Endothelial cell of umbilical vein (primary cell): ENCODE measurements at regions of chr3 and their contacts with region 1.

Region 1: GRCh38 chr3:42247576-42248027 is 18.4 kb downstream of the CCK start:
- DNase-seq: peak; percentile 61
- H3K4me3 ChIP-seq: no peak overlapping the region
- H3K27ac ChIP-seq: no peak overlapping the region
- H3K4me1 ChIP-seq: no peaks in the 10 kb centered on the region
- H3K27me3 ChIP-seq: peaks cover 20 to 24% of the 10 kb centered on the region in 2 experiments
- CTCF ChIP-seq: peak; percentile 60 to 70
- POLR2A ChIP-seq: no peak

Region 2: DNA sequence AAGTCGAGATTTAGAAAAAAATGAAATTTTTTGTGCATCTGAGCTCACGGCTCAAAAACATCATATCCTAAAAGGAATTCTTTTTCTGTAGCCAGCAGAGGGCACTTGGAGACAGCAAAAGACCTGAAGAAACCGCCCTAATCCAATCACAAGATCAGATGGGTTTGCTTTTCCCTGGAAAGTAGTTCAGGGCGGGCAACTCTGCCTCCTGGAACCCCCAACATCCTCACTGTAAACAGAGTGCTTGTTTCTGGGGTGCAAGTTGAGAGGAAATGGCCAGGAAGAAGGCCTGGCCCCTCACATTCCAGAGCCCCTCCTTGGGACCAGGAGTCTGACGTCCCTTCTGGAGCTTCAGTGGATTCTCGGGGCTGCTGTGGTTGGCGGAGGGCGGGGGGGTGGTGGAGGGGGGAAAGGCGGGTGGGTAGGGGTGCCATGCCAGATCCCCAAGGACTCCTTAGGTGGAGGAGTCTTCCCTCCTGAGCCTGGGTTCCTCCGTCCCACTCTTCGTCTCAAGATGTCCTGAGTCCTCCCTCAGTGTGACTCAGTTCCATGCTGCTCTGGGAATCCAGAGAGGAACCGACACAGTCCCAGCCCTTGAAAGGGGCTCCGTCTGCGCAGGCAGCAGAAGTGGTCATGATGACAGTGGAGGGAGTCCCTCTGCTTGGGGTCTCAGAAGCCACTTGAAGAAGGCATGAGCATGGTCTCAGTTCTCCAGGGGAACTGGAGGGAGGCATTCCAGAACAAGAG is 17.5 kb before region 1 on chr3:
- CTCF ChIA-PET with region 1: interaction called, 27 read pairs
- POLR2A ChIA-PET with region 1: no interaction called
- dilution Hi-C with region 1: no loop called
- intact Hi-C with region 1: no loop called
- DNase-seq: peak; percentile 46
- H3K4me3 ChIP-seq: no peak overlapping the region
- H3K27ac ChIP-seq: no peak overlapping the region
- H3K4me1 ChIP-seq: no peaks in the 10 kb centered on the region
- H3K27me3 ChIP-seq: peaks cover 4 to 7% of the 10 kb centered on the region in 2 experiments
- CTCF ChIP-seq: peak; percentile 43 to 45
- POLR2A ChIP-seq: no peak

Region 3: DNA sequence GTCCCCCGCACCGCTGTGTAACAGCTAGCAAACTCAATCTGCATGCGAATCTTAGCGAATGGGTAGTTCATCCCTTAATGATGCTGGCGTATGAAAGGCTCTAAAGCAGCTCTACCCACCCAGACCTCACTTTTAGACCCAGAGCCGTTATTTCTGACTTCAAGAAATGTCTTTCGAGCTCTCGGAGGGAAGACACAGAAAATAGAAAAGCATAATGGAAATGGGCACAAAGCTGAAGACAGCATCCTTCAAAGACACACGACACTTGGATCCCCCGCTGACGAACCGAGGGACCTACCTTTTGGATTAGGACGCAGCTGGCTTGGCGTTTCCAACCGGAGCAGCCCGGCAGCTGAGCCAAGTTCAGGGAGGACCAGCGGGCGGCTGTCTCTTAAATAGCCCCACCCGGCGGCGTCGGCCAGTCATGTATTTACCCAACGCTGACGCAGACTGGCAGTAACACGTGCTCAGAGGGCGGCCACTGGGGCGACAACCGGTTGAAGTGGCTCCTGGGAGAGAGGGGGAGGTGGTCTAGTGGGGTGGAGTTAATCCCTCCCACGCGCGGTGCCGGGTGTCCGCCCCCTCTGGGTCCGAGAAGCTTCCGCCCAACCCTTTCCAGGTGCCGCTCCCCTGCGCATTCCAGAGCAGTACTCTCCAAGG is 16.9 kb after region 1 on chr3:
- CTCF ChIA-PET with region 1: interaction called, 30 read pairs
- POLR2A ChIA-PET with region 1: no interaction called
- dilution Hi-C with region 1: no loop called
- intact Hi-C with region 1: no loop called
- DNase-seq: no peak
- H3K4me3 ChIP-seq: no peak overlapping the region
- H3K27ac ChIP-seq: no peak overlapping the region
- H3K4me1 ChIP-seq: no peaks in the 10 kb centered on the region
- H3K27me3 ChIP-seq: peaks cover 58 to 69% of the 10 kb centered on the region in 2 experiments
- CTCF ChIP-seq: no peak
- POLR2A ChIP-seq: no peak

Region 4: GRCh38 chr3:42434777-42435380 is 187.3 kb after region 1 on chr3:
- CTCF ChIA-PET with region 1: interaction called, 22 read pairs
- POLR2A ChIA-PET with region 1: no interaction called
- dilution Hi-C with region 1: no loop called
- intact Hi-C with region 1: no loop called
- DNase-seq: no peak
- H3K4me3 ChIP-seq: no peak overlapping the region
- H3K27ac ChIP-seq: no peak overlapping the region
- H3K4me1 ChIP-seq: no peaks in the 10 kb centered on the region
- H3K27me3 ChIP-seq: peaks cover 0 to 6% of the 10 kb centered on the region in 2 experiments
- CTCF ChIP-seq: no peak
- POLR2A ChIP-seq: no peak

Region 5: GRCh38 chr3:42539869-42540714 is 292.5 kb after region 1 on chr3:
- CTCF ChIA-PET with region 1: interaction called, 80 read pairs
- POLR2A ChIA-PET with region 1: no interaction called
- dilution Hi-C with region 1: no loop called
- intact Hi-C with region 1: loop called (anchors 1 kb)
- DNase-seq: no peak
- H3K4me3 ChIP-seq: no peak overlapping the region
- H3K27ac ChIP-seq: no peak overlapping the region
- H3K4me1 ChIP-seq: no peaks in the 10 kb centered on the region
- H3K27me3 ChIP-seq: no peaks in the 10 kb centered on the region
- CTCF ChIP-seq: peak; percentile 62 to 78
- POLR2A ChIP-seq: no peak

Region 6: GRCh38 chr3:42547401-42547945 is 299.9 kb after region 1 on chr3:
- CTCF ChIA-PET with region 1: interaction called, 80 read pairs
- POLR2A ChIA-PET with region 1: no interaction called
- dilution Hi-C with region 1: no loop called
- intact Hi-C with region 1: no loop called
- DNase-seq: peak; percentile 57
- H3K4me3 ChIP-seq: no peak overlapping the region
- H3K27ac ChIP-seq: no peak overlapping the region
- H3K4me1 ChIP-seq: no peaks in the 10 kb centered on the region
- H3K27me3 ChIP-seq: no peaks in the 10 kb centered on the region
- CTCF ChIP-seq: peak; percentile 95 to 96
- POLR2A ChIP-seq: no peak